Activated T-helper 1 cell treated with anti-CD3 and anti-CD28 coated beads, Interleukin-12 subunit alpha, Interleukin-12 subunit beta, Interleukin-2, Interleukin-4 antibody, amounts not matched to agents 30 ng/mL and 10 ng/mL and 1 ng/mL, durations not matched to agents 14 hours and 24 hours and 36 hours (primary cell): ENCODE measurements at regions of chr10 and their contacts with region 1.

Region 1: GRCh38 chr10:87861953-87862678 is 1.2 kb downstream of the KLLN start:
- DNase-seq: peak; percentile 91
- H3K4me3 Mint-ChIP-seq: peak overlapping the region; percentile 94
- H3K27ac Mint-ChIP-seq: peak overlapping the region; percentile 92
- H3K4me1 Mint-ChIP-seq: peaks cover 52% of the 10 kb centered on the region
- H3K27me3 Mint-ChIP-seq: peaks cover 5% of the 10 kb centered on the region

Region 2: GRCh38 chr10:87094373-87095235 is 767.5 kb before region 1 on chr10 and contains the starts of genes GLUD1 and SHLD2:
- intact Hi-C with region 1: loop called (anchors 2 kb)
- DNase-seq: peak; percentile 91
- H3K4me3 Mint-ChIP-seq: peak within 1 kb of the TSS; percentile 98
- H3K27ac Mint-ChIP-seq: peak within 1 kb of the TSS; percentile 95
- H3K4me1 Mint-ChIP-seq: peaks cover 45% of the 10 kb centered on the region
- H3K27me3 Mint-ChIP-seq: no peaks in the 10 kb centered on the region
- total RNA-seq, gene GLUD1: 116 and 125 TPM in 2 replicates
- total RNA-seq, gene SHLD2: 41.3 and 42.1 TPM in 2 replicates

Region 3: GRCh38 chr10:88064608-88065382 is 202.7 kb after region 1 on chr10:
- intact Hi-C with region 1: loop called (anchors 1 kb)
- DNase-seq: peak; percentile 11
- H3K4me3 Mint-ChIP-seq: no peak overlapping the region
- H3K27ac Mint-ChIP-seq: peak overlapping the region; percentile 66
- H3K4me1 Mint-ChIP-seq: peaks cover 60% of the 10 kb centered on the region
- H3K27me3 Mint-ChIP-seq: no peaks in the 10 kb centered on the region

Region 4: GRCh38 chr10:88152720-88153119 is 290.6 kb after region 1 on chr10:
- intact Hi-C with region 1: loop called (anchors 1 kb)
- DNase-seq: peak; percentile 57
- H3K4me3 Mint-ChIP-seq: peak overlapping the region; percentile 54
- H3K27ac Mint-ChIP-seq: peak overlapping the region; percentile 97
- H3K4me1 Mint-ChIP-seq: peaks cover 37% of the 10 kb centered on the region
- H3K27me3 Mint-ChIP-seq: peaks cover 5% of the 10 kb centered on the region

Region 5: GRCh38 chr10:88386821-88387773 is 525.0 kb after region 1 on chr10:
- intact Hi-C with region 1: loop called (anchors 1 kb)
- DNase-seq: no peak
- H3K4me3 Mint-ChIP-seq: no peak overlapping the region
- H3K27ac Mint-ChIP-seq: no peak overlapping the region
- H3K4me1 Mint-ChIP-seq: peaks cover 16% of the 10 kb centered on the region
- H3K27me3 Mint-ChIP-seq: no peaks in the 10 kb centered on the region

Region 6: GRCh38 chr10:88880282-88881076 is 1018.4 kb after region 1 on chr10:
- intact Hi-C with region 1: loop called (anchors 5 kb)
- DNase-seq: peak; percentile 68
- H3K4me3 Mint-ChIP-seq: peak overlapping the region; percentile 98
- H3K27ac Mint-ChIP-seq: peak overlapping the region; percentile 99
- H3K4me1 Mint-ChIP-seq: peaks cover 74% of the 10 kb centered on the region
- H3K27me3 Mint-ChIP-seq: no peaks in the 10 kb centered on the region